Breast epithelium (tissue), 4 donors: ENCODE measurements at regions of chr15 and their contacts with region 1.

Region 1: DNA sequence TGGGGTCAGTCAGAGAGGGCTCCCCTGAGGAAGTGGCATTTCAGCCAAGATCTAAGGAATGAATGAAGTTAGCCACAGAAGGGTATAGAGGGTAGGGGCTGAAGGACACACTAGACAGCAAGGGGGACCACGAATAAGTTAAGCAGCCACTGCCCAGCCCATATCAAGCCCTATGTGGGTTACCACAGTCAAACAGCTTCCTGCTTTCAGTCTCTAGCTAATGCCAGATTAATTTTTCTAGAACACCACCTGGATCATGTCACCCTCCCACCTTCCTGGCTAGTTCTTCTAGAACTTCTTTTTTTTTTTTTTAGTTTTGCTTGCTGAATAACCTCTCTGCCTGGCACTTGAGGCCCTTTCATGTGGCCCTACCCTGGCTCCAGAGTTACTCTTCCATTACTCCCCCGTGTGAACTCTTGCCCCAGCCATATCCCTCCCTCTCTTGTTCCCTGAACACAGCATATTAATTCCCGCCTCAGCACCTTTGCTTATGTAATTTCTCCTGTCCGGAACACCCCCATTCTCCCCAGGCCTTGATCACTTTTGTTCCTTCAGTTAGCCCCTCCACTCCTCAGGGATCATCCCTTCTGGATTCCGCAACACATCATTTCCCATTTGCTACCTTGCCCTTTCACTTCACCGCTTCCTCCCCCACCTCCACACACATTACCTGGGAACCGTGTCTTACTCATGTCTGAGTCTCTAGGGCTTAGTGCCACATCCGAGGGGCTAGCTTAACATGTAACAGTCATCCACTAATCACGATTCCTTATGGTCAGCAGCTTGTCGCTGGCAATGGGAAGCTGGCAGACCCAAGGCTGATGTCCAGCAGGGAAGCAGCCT is 20.6 kb upstream of the BNC1 start:
- DNase-seq: no peak
- H3K4me3 ChIP-seq: no peak overlapping the region
- H3K27ac ChIP-seq: peak overlapping the region; percentile 10 to 23
- H3K4me1 ChIP-seq: no peaks in the 10 kb centered on the region
- H3K27me3 ChIP-seq: no peaks in the 10 kb centered on the region
- CTCF ChIP-seq: no peak
- POLR2A ChIP-seq: no peak

Region 2: DNA sequence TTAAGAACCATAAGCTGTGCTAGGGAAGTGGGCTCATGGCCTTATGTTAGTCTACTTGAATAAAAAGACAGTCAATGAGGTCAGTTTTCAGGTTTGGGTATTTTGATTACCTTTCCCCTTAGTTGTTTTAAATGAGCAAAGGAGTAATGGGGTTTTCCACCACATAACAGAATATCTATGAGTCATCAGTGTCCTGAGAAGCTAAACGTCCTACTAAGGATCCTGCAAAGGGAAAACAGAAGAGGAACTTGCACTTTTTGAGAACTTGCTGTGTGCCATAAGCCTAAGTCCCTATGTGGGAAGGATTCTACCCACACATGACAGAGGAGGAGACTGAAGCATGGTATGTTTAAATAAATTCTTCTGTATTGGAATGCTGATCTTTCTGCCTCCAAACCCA is 1638.2 kb before region 1 on chr15:
- intact Hi-C with region 1: no loop called
- DNase-seq: no peak
- H3K4me3 ChIP-seq: no peak overlapping the region
- H3K27ac ChIP-seq: no peak overlapping the region
- H3K4me1 ChIP-seq: no peaks in the 10 kb centered on the region
- H3K27me3 ChIP-seq: no peaks in the 10 kb centered on the region
- CTCF ChIP-seq: no peak
- POLR2A ChIP-seq: no peak

Region 3: GRCh38 chr15:83352119-83352518 is 47.0 kb after region 1 on chr15:
- intact Hi-C with region 1: loop called (anchors 5 kb)
- DNase-seq: no peak
- H3K4me3 ChIP-seq: no peak overlapping the region
- H3K27ac ChIP-seq: no peak overlapping the region
- H3K4me1 ChIP-seq: no peaks in the 10 kb centered on the region
- H3K27me3 ChIP-seq: no peaks in the 10 kb centered on the region
- CTCF ChIP-seq: no peak
- POLR2A ChIP-seq: no peak

Region 4: DNA sequence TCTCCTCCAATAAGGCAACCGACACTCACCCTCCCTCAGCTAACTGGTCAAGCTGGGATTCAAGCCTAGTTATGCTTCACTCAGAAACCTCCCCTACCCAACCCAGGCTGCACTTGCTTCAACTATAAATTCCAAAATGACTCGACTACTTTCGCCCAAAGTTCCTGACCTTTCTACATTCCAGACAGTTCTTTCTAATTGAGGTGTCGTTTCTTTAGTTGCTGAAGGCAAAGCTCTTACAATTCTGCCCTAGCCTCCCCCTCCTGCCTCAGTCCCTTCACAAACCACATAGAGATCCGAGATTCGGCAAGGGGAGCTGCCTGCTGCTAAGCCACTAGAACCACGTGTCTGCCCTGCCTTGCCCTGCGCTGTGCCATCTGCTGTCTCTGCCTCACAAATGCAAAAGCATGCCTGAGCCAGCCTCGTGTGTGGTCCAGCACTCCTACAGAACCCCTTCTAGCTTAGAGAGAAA is 67.4 kb after region 1 on chr15:
- intact Hi-C with region 1: no loop called
- DNase-seq: no peak
- H3K4me3 ChIP-seq: no peak overlapping the region
- H3K27ac ChIP-seq: no peak overlapping the region
- H3K4me1 ChIP-seq: no peaks in the 10 kb centered on the region
- H3K27me3 ChIP-seq: peaks cover 0 to 33% of the 10 kb centered on the region in 2 donors
- CTCF ChIP-seq: no peak
- POLR2A ChIP-seq: no peak